Mammary epithelial cell (primary cell): ENCODE measurements at regions of chr11 and their contacts with region 1.

Region 1: DNA sequence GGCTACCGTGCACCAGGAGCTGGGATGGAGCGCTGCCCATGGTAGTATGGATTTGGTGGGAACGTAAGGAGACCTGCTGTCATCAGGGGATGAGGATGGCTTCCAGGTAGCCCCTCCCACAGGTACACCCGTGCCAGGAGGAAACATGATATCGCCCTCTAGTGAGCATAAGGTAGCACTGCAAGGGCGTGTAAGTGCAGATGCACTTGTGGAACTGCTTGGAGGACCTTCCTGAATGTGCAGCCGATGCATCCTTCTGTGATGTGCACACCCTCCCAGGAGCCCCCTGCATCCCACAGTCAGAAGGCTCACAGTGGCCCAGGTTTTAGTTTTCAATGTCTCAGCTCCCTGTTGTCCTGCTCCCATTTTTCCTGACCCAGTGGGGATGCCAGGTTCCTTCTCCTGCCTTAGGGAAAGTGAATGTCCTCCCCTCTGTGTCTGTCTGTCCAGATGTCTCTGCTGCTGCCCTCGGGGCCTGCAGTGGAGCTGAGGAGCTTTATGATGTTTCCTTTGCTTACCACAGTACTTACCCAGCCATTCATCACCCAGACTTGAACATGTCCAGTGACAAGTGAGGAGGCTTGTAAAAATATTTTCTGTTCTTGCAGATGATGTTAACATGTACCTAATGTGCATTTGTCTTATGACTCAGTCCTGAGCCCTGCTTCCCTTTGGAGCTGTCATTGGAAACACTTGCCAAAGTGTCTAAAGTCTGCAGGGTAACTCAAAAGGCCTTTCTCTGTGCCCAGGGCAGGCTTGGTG is 49.2 kb downstream of the DBX1 start:
- DNase-seq: peak; percentile 93
- H3K4me3 ChIP-seq: no peak overlapping the region
- H3K27ac ChIP-seq: peak overlapping the region; percentile 70
- H3K4me1 ChIP-seq: peaks cover 32% of the 10 kb centered on the region
- H3K27me3 ChIP-seq: no peaks in the 10 kb centered on the region
- CTCF ChIP-seq: peak; percentile 95 to 98

Region 2: DNA sequence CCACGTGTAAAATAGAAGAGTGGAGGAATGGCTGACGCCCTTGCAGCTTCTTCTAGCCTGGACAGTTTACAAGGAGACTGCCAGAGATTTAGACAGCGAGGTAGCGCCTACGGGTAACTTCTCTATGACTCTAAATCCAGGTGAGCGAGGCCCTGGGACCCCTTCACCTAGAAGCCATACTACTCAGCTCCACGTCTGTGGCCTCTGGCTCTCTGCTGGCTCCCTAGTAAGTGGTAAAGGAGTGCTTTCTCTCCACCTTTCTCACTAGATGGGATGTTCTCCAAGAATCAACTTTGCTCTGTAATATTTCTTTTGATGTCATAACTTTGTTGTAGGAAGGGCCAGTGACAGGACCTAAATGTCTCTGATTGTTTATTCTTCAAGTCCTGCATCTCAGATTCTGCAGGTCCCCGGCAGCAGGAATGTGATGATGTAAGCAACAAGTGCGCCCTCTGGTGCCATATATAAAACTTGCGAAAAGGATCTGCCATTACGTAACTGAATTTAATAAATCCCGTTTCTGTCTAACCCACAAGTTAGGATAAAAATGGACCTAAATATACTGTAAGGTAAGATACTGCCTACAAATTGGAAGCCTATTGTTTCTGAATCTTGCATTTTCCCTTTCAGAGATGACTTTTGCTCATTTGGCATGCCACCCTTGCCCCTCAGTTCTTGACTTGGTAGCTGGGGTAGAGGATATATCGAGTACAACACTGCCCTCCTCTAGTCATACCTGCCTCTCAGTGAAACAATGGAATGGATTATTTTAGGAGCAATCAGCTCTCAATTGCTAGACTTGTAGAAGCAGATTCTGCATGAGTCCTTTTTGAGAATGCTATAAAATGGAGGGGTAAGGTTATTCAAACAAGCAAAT is 1308.5 kb before region 1 on chr11:
- CTCF ChIA-PET with region 1: no interaction called
- dilution Hi-C with region 1: no loop called
- in situ Hi-C with region 1: no loop called
- intact Hi-C with region 1: no loop called
- DNase-seq: peak; percentile 40
- H3K4me3 ChIP-seq: no peak overlapping the region
- H3K27ac ChIP-seq: no peak overlapping the region
- H3K4me1 ChIP-seq: peaks cover 6% of the 10 kb centered on the region
- H3K27me3 ChIP-seq: peaks cover 4% of the 10 kb centered on the region
- CTCF ChIP-seq: peak; percentile 57 to 71

Region 3: GRCh38 chr11:19938169-19938856 is 172.8 kb before region 1 on chr11:
- CTCF ChIA-PET with region 1: interaction called, 4 read pairs
- dilution Hi-C with region 1: no loop called
- in situ Hi-C with region 1: no loop called
- intact Hi-C with region 1: loop called (anchors 1 kb)
- DNase-seq: peak; percentile 46
- H3K4me3 ChIP-seq: no peak overlapping the region
- H3K27ac ChIP-seq: peak overlapping the region; percentile 0
- H3K4me1 ChIP-seq: peaks cover 23% of the 10 kb centered on the region
- H3K27me3 ChIP-seq: no peaks in the 10 kb centered on the region
- CTCF ChIP-seq: peak; percentile 85 to 93

Region 4: DNA sequence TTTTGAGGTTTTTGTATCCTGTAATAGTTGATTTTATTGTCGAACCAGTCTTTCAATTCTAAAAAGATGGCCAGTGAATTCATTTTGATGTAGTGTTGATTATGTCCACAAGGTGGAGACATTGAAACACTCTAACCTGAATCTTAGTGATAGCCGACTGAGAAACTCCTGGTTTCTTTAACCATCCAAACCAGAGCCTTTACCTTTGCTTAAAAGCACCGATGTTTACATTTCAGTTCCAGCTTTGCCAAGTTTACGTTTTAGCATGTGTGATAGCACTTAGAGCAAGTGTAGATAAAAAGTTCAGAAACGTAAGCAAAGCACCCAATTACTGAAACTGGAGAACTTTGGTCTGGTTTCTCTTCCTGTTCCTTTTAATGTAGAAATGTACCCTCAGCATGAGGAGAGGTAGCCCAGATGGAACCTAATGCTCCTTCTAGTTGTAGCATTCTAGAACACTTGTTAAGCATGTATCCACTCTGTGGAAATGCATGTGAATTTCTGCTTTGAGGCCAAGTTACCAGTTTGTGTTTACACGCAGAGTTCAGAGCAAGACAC is 159.5 kb before region 1 on chr11:
- CTCF ChIA-PET with region 1: interaction called, 3 read pairs
- dilution Hi-C with region 1: no loop called
- in situ Hi-C with region 1: no loop called
- intact Hi-C with region 1: loop called (anchors 1 kb)
- DNase-seq: peak; percentile 62
- H3K4me3 ChIP-seq: no peak overlapping the region
- H3K27ac ChIP-seq: no peak overlapping the region
- H3K4me1 ChIP-seq: peaks cover 17% of the 10 kb centered on the region
- H3K27me3 ChIP-seq: no peaks in the 10 kb centered on the region
- CTCF ChIP-seq: peak; percentile 47 to 57

Region 5: GRCh38 chr11:20022363-20023081 is 88.6 kb before region 1 on chr11:
- CTCF ChIA-PET with region 1: interaction called, 3 read pairs
- dilution Hi-C with region 1: no loop called
- in situ Hi-C with region 1: no loop called
- intact Hi-C with region 1: loop called (anchors 2 kb)
- DNase-seq: peak; percentile 67
- H3K4me3 ChIP-seq: peak overlapping the region; percentile 43 to 64 (median 58)
- H3K27ac ChIP-seq: peak overlapping the region; percentile 26
- H3K4me1 ChIP-seq: peaks cover 48% of the 10 kb centered on the region
- H3K27me3 ChIP-seq: no peaks in the 10 kb centered on the region
- CTCF ChIP-seq: no peak

Region 6: GRCh38 chr11:20035701-20036620 is 75.1 kb before region 1 on chr11:
- CTCF ChIA-PET with region 1: no interaction called
- dilution Hi-C with region 1: no loop called
- in situ Hi-C with region 1: no loop called
- intact Hi-C with region 1: loop called (anchors 2 kb)
- DNase-seq: peak; percentile 98
- H3K4me3 ChIP-seq: no peak overlapping the region
- H3K27ac ChIP-seq: peak overlapping the region; percentile 41
- H3K4me1 ChIP-seq: peaks cover 46% of the 10 kb centered on the region
- H3K27me3 ChIP-seq: no peaks in the 10 kb centered on the region
- CTCF ChIP-seq: peak in 1 of 2 donors; percentile 9

Region 7: DNA sequence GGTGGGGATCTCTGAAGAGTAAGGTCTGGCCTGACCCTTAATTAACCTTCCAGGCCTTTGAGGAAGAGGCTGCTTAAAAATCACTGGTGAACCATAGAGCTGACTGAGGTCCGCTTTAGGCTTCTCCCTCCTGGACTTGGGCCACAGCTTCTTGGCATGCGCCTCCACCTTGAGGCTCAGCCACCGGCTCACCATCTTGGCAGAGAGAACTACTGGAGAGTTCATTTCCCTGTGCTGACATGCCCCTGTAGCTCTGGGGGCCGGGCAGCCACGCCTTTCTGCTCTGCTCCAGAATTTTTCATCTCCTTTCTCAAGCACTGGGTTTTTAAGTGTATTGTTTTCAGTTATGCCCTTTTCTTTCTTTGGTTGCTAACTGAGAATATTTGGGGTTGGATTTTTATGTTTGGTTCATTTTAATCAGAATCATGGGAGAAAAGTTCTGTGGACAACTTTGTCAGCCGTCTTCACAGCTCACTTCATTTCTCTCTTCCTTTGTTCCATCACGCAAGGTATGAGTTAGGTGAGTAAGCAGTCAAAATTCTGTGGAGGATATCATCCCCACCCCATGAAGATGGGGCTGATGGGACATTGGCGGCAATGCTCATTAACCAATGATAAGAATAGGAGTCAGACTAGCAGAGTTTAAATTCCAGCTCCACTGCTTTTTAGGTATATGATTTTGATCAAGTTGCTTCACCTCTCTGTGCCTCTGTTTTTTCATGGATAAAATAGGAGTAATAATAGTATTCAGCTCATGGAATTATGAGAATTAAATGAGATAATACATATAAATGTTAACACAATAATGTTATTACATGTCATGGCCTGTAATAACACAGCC is 54.8 kb before region 1 on chr11:
- CTCF ChIA-PET with region 1: no interaction called
- dilution Hi-C with region 1: no loop called
- in situ Hi-C with region 1: no loop called
- intact Hi-C with region 1: loop called (anchors 2 kb)
- DNase-seq: peak; percentile 88
- H3K4me3 ChIP-seq: no peak overlapping the region
- H3K27ac ChIP-seq: peak overlapping the region; percentile 91
- H3K4me1 ChIP-seq: peaks cover 84% of the 10 kb centered on the region
- H3K27me3 ChIP-seq: no peaks in the 10 kb centered on the region
- CTCF ChIP-seq: no peak